Posterior vena cava (tissue), 2 donors: ENCODE measurements at regions of chr10 and their contacts with region 1.

Region 1: DNA sequence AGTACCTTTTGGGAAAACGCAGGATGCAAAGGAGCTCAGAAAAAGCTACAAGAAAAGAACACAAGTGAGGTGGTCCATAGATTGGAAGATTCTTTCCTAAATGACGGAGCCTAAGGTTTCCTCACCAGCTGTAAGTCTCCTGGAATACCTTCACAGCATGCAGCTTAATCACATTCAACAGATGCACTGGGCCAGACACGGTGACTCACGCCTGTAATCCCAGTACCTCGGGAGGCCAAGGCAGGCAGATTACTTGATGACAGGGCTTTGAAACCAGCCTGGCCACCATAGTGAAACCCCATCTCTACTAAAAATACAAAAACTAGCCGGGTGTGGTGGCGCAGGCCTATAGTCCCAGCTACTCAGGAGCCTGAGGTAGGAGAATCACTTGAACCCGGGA is 228.7 kb downstream of the FRMD4A start:
- DNase-seq: no peak

Region 2: DNA sequence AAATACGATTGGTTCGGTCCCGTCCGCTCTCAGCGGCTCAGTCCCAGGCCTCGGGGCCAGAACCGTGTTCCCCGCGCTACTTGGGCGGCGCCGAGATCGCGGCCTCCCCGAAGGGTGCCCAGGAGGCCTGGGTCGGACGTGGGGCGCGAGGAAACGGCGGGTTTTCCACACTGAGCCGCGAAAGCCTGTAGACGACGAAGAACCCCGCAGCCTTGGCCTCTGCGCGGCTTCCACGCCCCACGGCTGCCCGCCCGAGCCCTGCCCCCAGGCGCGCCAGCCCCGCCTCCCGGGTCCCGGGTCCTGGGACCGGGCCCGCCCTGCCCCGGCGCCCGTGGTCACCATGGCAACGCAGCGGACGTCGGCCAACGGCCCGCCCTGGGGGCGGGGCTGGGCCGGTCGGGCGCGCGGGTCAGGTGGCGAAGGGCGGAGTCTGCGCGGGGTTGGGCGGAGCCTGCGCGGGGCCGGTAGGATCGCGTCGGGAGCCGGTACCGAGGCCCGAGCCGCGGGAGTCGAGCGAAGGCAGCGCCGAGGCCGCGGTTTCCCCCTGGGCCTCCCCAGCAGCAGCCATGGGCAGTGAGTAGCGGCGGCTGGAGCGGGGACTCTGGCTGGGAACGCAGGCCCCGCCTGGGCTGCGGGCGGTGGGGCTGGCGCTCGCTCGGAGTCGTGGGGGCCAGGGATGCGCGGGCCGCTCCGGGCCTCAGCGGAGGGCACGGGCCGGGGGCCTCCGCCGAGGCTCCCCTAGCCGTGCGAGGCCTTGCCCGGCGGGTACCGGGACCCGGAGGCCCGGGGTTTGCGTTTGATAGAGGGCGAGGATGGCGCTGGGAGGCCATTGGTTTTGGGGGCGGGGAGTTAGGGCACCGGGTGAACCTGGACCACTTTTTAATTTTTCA is 1972.6 kb before region 1 on chr10 and contains the start of gene SEC61A2:
- intact Hi-C with region 1: loop called in 1 of 2 experiments (anchors 5 kb)
- DNase-seq: peak; percentile 99
- total RNA-seq, gene SEC61A2: 5.9 to 7.4 TPM